GM23248 (cell line): ENCODE measurements at regions of chr9 and their contacts with region 1.

Region 1: DNA sequence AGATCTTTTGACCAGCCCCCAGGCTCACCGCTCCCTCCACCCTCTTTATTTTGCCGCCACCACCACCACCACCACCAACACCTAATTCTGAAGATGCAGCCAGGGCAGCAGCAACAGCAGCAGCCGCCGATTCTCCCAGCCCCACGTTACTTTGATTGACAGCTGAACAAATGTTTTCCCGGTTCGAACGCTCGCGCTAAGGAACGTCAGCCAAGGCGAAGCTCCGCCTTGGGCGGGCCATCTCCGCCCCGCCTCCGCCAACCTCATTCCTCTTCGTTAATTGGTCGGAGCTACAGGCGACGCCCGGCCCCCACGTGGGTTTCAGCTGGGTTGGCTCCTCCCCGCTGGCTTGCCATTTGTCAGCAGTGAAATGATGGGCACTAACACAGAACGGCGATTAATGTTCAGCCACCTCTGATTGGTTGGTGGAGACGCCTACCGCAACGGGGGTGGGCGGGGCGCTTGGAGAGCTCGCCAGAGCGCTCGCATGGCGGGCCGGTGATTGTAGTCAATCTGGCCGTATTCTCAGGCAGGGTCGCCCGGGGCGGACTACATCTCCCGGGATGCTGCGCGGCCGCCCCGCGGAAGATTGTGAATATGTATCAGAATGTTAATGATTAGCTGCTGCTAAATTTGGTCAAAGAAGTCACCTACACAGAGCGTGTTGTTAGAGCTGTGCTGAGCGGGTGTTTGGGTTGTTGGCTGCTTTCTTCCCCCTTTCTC is at the start of gene TLE4:
- DNase-seq: peak; percentile 100
- H3K4me3 ChIP-seq: peak within 1 kb of the TSS; percentile 96
- H3K27ac ChIP-seq: peak within 1 kb of the TSS; percentile 97
- H3K4me1 ChIP-seq: peaks cover 23% of the 10 kb centered on the region
- H3K27me3 ChIP-seq: no peaks in the 10 kb centered on the region
- total RNA-seq, gene TLE4: 23.3 and 37.8 TPM in 2 replicates

Region 2: DNA sequence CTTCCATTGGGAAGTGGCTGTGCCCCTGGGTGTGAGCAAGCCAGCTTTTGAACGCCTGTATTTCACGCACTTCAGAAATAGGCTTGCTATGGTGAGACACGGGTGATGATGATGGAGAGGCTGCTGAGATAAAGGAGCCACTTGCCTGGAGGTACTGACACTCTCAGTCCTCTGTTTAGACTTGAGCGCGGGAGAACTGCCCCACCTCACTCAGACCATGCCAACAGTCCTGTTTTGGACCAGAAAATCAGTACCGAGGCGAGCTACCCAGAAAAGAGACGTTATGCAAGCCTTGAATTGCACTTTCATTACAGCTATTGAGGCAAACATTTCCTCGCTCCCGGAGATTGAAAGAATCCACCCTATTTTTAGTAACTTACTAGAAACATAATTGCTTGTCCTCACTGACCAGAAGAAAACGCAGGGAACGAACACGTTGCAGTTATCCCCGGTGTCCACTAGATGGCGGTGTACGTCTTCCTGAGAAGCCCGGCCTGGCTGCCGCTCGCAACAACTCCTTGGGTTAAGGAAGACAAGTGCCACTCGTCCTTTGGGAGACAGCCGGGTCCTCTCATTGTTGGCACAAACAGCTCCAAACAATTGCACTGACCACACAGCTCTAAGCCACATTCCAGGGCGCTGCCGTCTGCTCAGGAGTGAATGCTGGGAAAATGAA is 1132.1 kb before region 1 on chr9:
- in situ Hi-C with region 1: loop called (anchors 25 kb)
- DNase-seq: peak; percentile 84
- H3K4me3 ChIP-seq: peak overlapping the region; percentile 38; the same call in 1 of the 2 replicates
- H3K27ac ChIP-seq: no peak overlapping the region
- H3K4me1 ChIP-seq: no peaks in the 10 kb centered on the region
- H3K27me3 ChIP-seq: peaks cover 20% of the 10 kb centered on the region

Region 3: GRCh38 chr9:79012561-79012960 is 558.9 kb before region 1 on chr9:
- in situ Hi-C with region 1: no loop called
- DNase-seq: peak; percentile 77
- H3K4me3 ChIP-seq: no peak overlapping the region
- H3K27ac ChIP-seq: peak overlapping the region; percentile 21; the same call in 1 of the 2 replicates
- H3K4me1 ChIP-seq: peaks cover 43% of the 10 kb centered on the region
- H3K27me3 ChIP-seq: no peaks in the 10 kb centered on the region

Region 4: GRCh38 chr9:79477955-79478771 is 93.3 kb before region 1 on chr9:
- in situ Hi-C with region 1: no loop called
- DNase-seq: peak; percentile 24
- H3K4me3 ChIP-seq: no peak overlapping the region
- H3K27ac ChIP-seq: no peak overlapping the region
- H3K4me1 ChIP-seq: no peaks in the 10 kb centered on the region
- H3K27me3 ChIP-seq: no peaks in the 10 kb centered on the region